ENCODE measurements at regions of chr16 and their contacts with region 1.

Region 1: DNA sequence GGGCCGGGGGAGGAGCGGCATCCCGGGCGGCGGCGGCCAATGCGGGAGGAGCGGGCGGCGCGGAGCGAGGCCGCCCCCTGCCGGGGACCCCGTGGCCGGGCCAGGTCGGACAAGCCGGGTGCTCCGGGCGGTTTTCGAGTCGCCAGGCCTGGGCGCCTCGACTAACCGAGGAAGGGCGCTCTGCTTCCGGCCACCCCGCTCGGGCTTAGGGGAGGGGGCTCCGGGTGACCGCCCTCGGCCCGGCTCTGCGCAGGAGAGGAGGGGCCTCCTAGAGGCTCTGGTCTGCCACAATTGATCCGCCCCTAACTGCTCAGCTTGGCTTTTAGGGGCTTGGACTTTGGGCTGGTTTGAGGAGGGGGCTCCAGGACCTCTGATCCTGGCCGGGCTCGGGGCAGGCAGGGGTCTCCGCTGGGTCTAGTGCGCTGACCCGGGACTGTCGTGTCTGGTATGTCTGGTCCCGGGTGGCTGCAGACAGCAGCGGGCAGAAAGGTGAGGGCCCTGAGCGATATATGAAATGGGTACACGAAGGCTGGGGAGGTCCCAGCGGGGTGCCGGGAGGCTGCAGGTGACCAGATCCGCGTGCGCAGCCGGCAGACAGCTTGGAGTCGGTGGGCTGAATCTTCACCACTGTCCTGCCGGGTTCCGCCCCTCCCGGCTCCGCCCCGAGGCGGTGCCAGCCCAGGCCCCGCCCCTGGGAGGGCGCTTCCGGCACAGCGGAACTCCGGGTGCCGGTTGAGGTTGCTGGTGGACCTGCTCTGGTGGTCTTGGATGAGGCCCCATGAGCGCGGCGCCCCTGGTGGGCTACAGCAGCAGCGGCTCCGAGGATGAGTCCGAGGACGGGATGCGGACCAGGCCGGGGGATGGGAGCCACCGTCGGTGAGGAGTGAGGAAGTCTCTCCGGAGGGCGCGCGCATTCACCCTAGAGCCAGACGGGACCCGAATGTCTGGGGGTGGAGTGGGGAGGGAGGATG is at the start of gene USB1:
- DNase-seq: peak; percentile 74 to 96 (median 86)
- ATAC-seq: peak; percentile 87
- H3K4me3 ChIP-seq: peak within 1 kb of the TSS; percentile 98
- H3K4me3 Mint-ChIP-seq: peak within 1 kb of the TSS; percentile 85 to 94 (median 92)
- H3K27ac ChIP-seq: peak within 1 kb of the TSS; percentile 85
- H3K27ac Mint-ChIP-seq: peak within 1 kb of the TSS; percentile 76 to 95 (median 90)
- H3K4me1 ChIP-seq: peaks cover 37% of the 10 kb centered on the region in 2 donors
- H3K4me1 Mint-ChIP-seq: peaks cover 31 to 75% (median 58%) of the 10 kb centered on the region in 7 donors
- H3K27me3 ChIP-seq: no peaks in the 10 kb centered on the region
- H3K27me3 Mint-ChIP-seq: no peaks in the 10 kb centered on the region
- total RNA-seq, gene USB1: 28.7 to 50.8 (median 28.9) TPM

Region 2: DNA sequence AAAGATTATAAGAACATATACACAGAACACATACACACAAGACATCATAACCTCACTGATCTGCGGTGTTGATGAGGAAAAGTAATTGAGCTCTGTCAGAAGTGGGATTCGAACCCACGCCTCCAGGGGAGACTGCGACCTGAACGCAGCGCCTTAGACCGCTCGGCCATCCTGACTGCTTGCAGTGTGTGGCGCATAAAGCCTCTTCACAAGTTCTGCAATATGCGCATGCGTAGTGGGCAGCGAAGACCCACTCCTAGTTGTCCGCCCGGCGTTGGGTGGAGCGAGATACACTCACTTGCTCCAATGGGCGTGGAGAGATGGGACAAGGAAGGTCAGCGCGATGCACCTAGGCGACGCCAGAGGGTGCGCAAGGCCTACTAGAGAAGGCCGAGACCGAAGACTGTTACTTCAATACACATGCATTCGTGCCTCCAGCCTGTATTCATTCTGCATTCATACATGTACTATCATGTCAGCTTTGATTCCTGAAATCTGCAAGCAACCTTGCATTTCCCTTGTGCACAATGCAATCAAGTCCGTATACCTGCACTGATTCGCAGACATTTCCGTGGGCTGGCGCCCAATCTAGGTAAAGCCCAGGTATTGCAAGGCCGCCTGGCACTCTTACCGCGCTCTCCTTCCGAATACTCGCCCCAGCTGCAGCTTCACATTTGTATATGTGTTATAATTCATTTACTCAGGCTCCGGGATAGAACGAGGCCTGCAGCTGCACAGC is 700.4 kb before region 1 on chr16:
- CTCF ChIA-PET with region 1: no interaction called
- POLR2A ChIA-PET with region 1: no interaction called
- intact Hi-C with region 1: loop called (anchors 1 to 10 kb)
- DNase-seq: peak; percentile 98 to 100 (median 99)
- ATAC-seq: peak; percentile 96
- H3K4me3 ChIP-seq: peak overlapping the region; percentile 65
- H3K4me3 Mint-ChIP-seq: no peak overlapping the region
- H3K27ac ChIP-seq: peak overlapping the region; percentile 75
- H3K27ac Mint-ChIP-seq: no peak overlapping the region
- H3K4me1 ChIP-seq: peaks cover 16 to 28% of the 10 kb centered on the region in 2 donors
- H3K4me1 Mint-ChIP-seq: peaks cover 4 to 24% (median 11%) of the 10 kb centered on the region in 7 donors
- H3K27me3 ChIP-seq: no peaks in the 10 kb centered on the region
- H3K27me3 Mint-ChIP-seq: peaks cover 0 to 4% (median 0%) of the 10 kb centered on the region in 5 donors

Region 3: DNA sequence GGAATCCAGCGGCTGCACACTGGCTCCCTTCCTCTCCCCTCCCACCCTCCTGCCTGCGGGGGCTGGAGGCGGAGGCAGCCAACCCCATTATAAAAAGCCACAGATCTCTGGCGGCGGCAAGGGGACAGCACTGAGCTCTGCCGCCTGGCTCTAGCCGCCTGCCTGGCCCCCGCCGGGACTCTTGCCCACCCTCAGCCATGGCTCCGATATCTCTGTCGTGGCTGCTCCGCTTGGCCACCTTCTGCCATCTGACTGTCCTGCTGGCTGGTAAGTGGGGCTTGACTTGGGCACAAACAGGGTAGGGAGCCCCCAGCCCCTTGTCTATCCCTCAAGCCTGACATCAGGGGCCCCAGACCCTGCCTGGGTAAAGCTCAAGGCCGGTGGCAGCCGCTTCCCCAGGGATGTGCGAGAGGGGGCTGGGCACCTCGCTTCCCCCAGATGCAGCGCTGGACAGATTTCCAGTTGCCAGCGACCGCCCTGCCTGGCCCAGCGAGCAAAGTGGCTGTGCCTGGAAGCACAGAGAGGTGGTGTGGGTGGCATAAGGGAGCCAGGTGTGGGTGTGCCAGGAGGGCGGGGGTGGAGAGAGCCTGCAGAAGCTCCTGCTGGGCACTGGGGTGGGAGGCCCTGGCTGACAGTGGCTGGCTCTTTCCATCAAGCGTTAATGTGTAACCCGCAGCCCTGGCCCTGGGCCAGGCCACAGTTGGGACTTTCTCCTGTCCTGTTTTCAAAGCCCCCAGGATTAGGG is 628.4 kb before region 1 on chr16 and contains the start of gene CX3CL1:
- CTCF ChIA-PET with region 1: no interaction called
- POLR2A ChIA-PET with region 1: no interaction called
- intact Hi-C with region 1: no loop called
- DNase-seq: no peak
- ATAC-seq: no peak
- H3K4me3 ChIP-seq: no peak within 1 kb of the TSS
- H3K4me3 Mint-ChIP-seq: no peak within 1 kb of the TSS
- H3K27ac ChIP-seq: no peak within 1 kb of the TSS
- H3K27ac Mint-ChIP-seq: no peak within 1 kb of the TSS
- H3K4me1 ChIP-seq: no peaks in the 10 kb centered on the region
- H3K4me1 Mint-ChIP-seq: peaks cover 0 to 4% (median 0%) of the 10 kb centered on the region in 7 donors
- H3K27me3 ChIP-seq: no peaks in the 10 kb centered on the region
- H3K27me3 Mint-ChIP-seq: peaks cover 0 to 14% (median 0%) of the 10 kb centered on the region in 5 donors
- total RNA-seq, gene CX3CL1: not detected

Region 4: DNA sequence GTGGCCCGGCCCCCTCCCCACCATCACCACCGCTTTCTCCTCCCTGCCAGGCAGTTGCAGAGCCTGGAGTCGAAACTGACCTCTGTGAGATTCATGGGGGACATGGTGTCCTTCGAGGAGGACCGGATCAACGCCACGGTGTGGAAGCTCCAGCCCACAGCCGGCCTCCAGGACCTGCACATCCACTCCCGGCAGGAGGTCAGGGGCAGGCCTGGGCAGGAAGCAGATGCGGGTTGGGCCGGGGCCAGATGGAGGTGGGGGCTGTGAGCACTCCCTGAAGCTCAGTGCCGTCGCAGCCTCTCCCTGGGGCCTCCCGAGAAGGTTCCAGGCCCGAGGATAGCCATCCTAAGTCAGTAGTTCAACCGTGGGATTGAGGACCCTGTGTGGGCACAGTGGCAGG is 347.1 kb before region 1 on chr16:
- CTCF ChIA-PET with region 1: no interaction called
- POLR2A ChIA-PET with region 1: no interaction called
- intact Hi-C with region 1: no loop called
- DNase-seq: no peak
- ATAC-seq: no peak
- H3K4me3 ChIP-seq: no peak overlapping the region
- H3K4me3 Mint-ChIP-seq: no peak overlapping the region
- H3K27ac ChIP-seq: no peak overlapping the region
- H3K27ac Mint-ChIP-seq: no peak overlapping the region
- H3K4me1 ChIP-seq: peaks cover 0 to 24% of the 10 kb centered on the region in 2 donors
- H3K4me1 Mint-ChIP-seq: peaks cover 6 to 22% (median 9%) of the 10 kb centered on the region in 7 donors
- H3K27me3 ChIP-seq: no peaks in the 10 kb centered on the region
- H3K27me3 Mint-ChIP-seq: no peaks in the 10 kb centered on the region

Region 5: DNA sequence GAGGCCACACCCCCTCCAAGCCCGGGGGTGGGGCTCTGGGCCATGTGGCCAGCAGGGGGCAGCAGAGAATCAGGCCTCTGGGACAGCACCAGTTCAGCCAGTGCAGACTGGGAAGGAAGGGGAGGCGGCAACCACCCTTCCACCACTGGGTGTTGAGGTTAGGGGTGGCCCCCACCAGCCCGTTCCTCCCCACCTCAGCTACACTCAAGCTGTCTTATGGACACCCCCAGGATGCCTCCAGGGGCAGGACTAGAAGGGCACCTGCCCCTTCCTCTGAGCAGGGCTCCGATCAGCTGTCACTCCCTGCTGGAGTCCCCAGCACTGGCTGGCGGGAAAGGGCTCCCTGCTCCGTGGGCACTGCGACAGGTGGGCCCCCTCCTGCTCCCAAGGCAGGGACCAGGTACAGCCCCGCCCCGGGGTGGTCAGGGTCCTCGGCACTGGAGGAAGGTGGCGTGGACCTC is 243.6 kb before region 1 on chr16:
- CTCF ChIA-PET with region 1: no interaction called
- POLR2A ChIA-PET with region 1: no interaction called
- intact Hi-C with region 1: loop called (anchors 1 kb)
- DNase-seq: peak; percentile 61 to 93 (median 81)
- ATAC-seq: peak; percentile 93
- H3K4me3 ChIP-seq: no peak overlapping the region
- H3K4me3 Mint-ChIP-seq: no peak overlapping the region
- H3K27ac ChIP-seq: no peak overlapping the region
- H3K27ac Mint-ChIP-seq: no peak overlapping the region
- H3K4me1 ChIP-seq: peaks cover 0 to 5% of the 10 kb centered on the region in 2 donors
- H3K4me1 Mint-ChIP-seq: peaks cover 0 to 3% (median 0%) of the 10 kb centered on the region in 7 donors
- H3K27me3 ChIP-seq: no peaks in the 10 kb centered on the region
- H3K27me3 Mint-ChIP-seq: no peaks in the 10 kb centered on the region

Region 6: DNA sequence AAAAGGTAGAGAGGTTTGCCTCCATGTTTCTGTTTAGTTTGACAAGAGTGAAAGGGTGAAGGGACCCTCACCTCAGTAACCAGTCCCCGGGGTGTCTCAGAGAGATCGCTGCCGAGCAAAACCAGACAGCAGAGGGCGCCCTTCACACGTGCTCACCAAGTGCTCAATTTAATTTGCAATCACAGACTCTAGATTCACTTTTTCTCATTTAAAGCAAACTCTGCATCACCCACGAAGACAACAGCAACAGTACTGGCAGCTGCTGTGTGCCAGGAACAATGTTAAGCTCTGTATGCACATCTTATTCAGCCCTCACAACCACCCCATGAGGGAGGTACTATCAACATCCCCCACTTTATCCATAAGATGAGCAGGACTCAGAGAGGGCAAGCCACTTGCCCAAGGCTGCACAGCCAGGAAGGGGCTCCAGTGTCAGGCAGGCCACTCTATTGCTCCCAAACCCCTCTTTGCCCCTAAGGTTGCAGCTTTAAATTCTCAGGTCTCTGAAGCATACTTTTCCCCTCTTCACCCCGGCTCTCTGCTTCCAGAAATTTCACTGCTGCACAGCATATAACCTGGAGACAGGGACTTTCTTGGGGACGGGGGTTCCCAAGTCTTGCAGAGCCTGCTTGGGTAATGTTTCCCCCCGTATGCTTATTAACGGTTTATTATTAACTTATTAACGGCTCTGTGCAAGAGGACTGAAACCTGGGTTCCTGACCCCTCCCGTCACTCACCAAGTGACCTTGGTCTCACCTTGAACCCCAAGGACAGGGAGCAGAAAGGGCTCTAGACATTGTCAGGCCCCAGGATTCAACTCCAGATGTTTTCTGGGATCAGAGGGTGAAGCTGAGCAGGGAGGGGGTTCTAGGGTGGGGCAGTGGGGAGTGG is 101.0 kb before region 1 on chr16:
- CTCF ChIA-PET with region 1: interaction called, 43 read pairs
- POLR2A ChIA-PET with region 1: interaction called, 4 read pairs
- intact Hi-C with region 1: loop called (anchors 1 kb)
- DNase-seq: peak; percentile 55 to 81 (median 71)
- ATAC-seq: peak; percentile 86
- H3K4me3 ChIP-seq: no peak overlapping the region
- H3K4me3 Mint-ChIP-seq: no peak overlapping the region
- H3K27ac ChIP-seq: no peak overlapping the region
- H3K27ac Mint-ChIP-seq: peak overlapping the region in 1 of 9 donors; percentile 1
- H3K4me1 ChIP-seq: no peaks in the 10 kb centered on the region
- H3K4me1 Mint-ChIP-seq: peaks cover under 1 to 6% (median 3%) of the 10 kb centered on the region in 7 donors
- H3K27me3 ChIP-seq: no peaks in the 10 kb centered on the region
- H3K27me3 Mint-ChIP-seq: peaks cover 4 to 11% (median 8%) of the 10 kb centered on the region in 5 donors

Region 7: DNA sequence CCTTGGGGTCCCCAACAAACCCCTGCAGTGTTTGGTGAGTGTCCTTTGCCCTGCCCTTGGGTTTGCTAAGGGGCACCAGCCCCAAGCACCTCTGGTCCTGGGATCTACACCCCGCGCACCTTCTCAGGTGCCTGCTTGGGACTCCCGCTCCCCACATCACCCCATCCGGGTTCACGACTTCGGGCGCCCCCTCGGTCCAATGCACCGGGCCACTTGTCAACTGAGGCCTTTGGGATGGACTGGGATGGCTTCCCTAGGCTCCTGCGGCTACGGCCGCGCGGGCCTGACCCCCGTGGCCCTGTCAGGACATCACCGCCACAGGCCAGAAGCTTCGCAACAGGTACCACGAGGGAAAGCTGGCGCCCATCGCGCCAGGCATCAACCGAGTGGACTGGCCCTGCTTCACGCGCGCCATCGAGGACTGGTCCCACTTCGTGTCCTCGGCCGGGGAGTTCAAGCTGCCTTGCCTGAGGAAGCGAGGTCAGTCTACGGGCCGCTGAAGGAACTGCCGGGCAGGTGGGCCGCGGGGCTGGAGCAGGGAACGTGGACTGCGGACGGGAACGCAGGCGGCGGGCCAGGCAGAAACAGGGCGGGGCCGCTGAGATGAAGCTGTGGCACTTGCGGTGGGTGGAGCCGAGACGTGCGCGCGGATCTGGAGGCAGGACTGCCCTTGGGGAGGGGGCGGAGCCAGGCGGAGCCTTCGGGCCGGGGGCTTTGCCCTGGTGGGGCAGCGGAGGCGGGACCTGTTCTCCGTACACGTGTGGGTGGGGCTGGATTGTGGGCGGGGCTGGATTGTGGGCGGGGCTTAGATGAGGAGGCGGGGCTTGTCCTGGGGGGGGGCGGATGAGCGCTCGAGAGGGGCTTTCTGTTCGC is 16.4 kb before region 1 on chr16:
- CTCF ChIA-PET with region 1: interaction called, 6 read pairs
- POLR2A ChIA-PET with region 1: interaction called, 15 read pairs
- intact Hi-C with region 1: loop called (anchors 1 kb)
- DNase-seq: peak; percentile 75 to 93 (median 90)
- ATAC-seq: peak; percentile 99
- H3K4me3 ChIP-seq: peak overlapping the region; percentile 63
- H3K4me3 Mint-ChIP-seq: peak overlapping the region; percentile 84 to 94 (median 91)
- H3K27ac ChIP-seq: peak overlapping the region; percentile 64
- H3K27ac Mint-ChIP-seq: peak overlapping the region; percentile 37 to 93 (median 72)
- H3K4me1 ChIP-seq: peaks cover 6% of the 10 kb centered on the region in 2 donors
- H3K4me1 Mint-ChIP-seq: peaks cover 2 to 21% (median 8%) of the 10 kb centered on the region in 7 donors
- H3K27me3 ChIP-seq: no peaks in the 10 kb centered on the region
- H3K27me3 Mint-ChIP-seq: peaks cover 0 to 21% (median 0%) of the 10 kb centered on the region in 5 donors

Region 8: GRCh38 chr16:58176608-58177352 is 175.8 kb after region 1 on chr16:
- CTCF ChIA-PET with region 1: no interaction called
- POLR2A ChIA-PET with region 1: no interaction called
- intact Hi-C with region 1: no loop called
- DNase-seq: peak in 6 of 9 donors; percentile 26 to 61 (median 43)
- ATAC-seq: peak; percentile 83
- H3K4me3 ChIP-seq: peak overlapping the region; percentile 13
- H3K4me3 Mint-ChIP-seq: peak overlapping the region; percentile 23 to 71 (median 62)
- H3K27ac ChIP-seq: peak overlapping the region; percentile 52
- H3K27ac Mint-ChIP-seq: peak overlapping the region; percentile 78 to 94 (median 88)
- H3K4me1 ChIP-seq: peaks cover 16 to 32% of the 10 kb centered on the region in 2 donors
- H3K4me1 Mint-ChIP-seq: peaks cover 25 to 60% (median 44%) of the 10 kb centered on the region in 7 donors
- H3K27me3 ChIP-seq: no peaks in the 10 kb centered on the region
- H3K27me3 Mint-ChIP-seq: no peaks in the 10 kb centered on the region

Region 9: GRCh38 chr16:58236231-58236690 is 235.3 kb after region 1 on chr16:
- CTCF ChIA-PET with region 1: no interaction called
- POLR2A ChIA-PET with region 1: no interaction called
- intact Hi-C with region 1: loop called in 1 of 2 experiments (anchors 5 kb)
- DNase-seq: peak; percentile 18 to 56 (median 45)
- ATAC-seq: peak; percentile 89
- H3K4me3 ChIP-seq: peak overlapping the region; percentile 64
- H3K4me3 Mint-ChIP-seq: peak overlapping the region; percentile 82 to 93 (median 89)
- H3K27ac ChIP-seq: no peak overlapping the region
- H3K27ac Mint-ChIP-seq: peak overlapping the region in 4 of 9 donors; percentile 5 to 36 (median 23)
- H3K4me1 ChIP-seq: peaks cover 8 to 10% of the 10 kb centered on the region in 2 donors
- H3K4me1 Mint-ChIP-seq: peaks cover 0 to 17% (median 13%) of the 10 kb centered on the region in 7 donors
- H3K27me3 ChIP-seq: no peaks in the 10 kb centered on the region
- H3K27me3 Mint-ChIP-seq: peaks cover 5 to 47% (median 21%) of the 10 kb centered on the region in 5 donors

Region 10: DNA sequence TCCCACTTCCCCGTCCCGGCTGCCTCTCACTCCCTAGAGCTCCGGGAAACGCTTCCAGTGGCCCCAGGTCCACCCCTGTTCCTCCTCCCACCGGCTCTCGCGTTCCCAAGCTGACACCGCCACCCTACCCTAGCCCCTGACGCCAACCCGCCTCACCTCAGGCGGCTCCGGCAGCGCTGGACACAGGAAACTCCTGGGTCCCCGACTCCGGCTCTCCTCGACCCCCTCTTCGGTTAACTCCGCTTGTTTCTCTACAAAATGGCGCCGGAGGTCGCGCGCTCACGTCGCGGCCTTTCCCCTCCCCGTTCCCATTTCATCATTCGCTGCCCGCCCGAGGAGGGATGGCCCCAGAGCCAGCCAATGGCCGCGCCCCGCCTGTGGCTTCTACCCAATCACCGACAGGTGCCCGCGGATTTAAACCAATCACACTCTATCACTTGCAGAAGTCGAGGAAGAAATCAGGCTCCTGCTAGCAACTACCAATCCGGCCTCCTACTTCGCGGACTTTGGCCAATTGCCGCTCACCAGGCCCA is 628.6 kb after region 1 on chr16 and contains the start of gene CNOT1:
- CTCF ChIA-PET with region 1: no interaction called
- POLR2A ChIA-PET with region 1: no interaction called
- intact Hi-C with region 1: loop called in 1 of 2 experiments (anchors 1 kb)
- DNase-seq: peak; percentile 92 to 100 (median 99)
- ATAC-seq: peak; percentile 91
- H3K4me3 ChIP-seq: peak within 1 kb of the TSS; percentile 84
- H3K4me3 Mint-ChIP-seq: peak within 1 kb of the TSS; percentile 94 to 100 (median 98)
- H3K27ac ChIP-seq: peak within 1 kb of the TSS; percentile 96
- H3K27ac Mint-ChIP-seq: peak within 1 kb of the TSS; percentile 99 to 100 (median 100)
- H3K4me1 ChIP-seq: peaks cover 14 to 24% of the 10 kb centered on the region in 2 donors
- H3K4me1 Mint-ChIP-seq: peaks cover 16 to 47% (median 31%) of the 10 kb centered on the region in 7 donors
- H3K27me3 ChIP-seq: no peaks in the 10 kb centered on the region
- H3K27me3 Mint-ChIP-seq: peaks cover 0 to 2% (median 0%) of the 10 kb centered on the region in 5 donors
- total RNA-seq, gene CNOT1: 216 to 249 (median 236) TPM

Measured in naive thymus-derived CD4-positive, alpha-beta T cell (primary cell).